Activated B cell treated with CpG ODN at 0.5 μM for 24 hours (primary cell): ENCODE measurements at regions of chrX and their contacts with region 1.

Region 1: DNA sequence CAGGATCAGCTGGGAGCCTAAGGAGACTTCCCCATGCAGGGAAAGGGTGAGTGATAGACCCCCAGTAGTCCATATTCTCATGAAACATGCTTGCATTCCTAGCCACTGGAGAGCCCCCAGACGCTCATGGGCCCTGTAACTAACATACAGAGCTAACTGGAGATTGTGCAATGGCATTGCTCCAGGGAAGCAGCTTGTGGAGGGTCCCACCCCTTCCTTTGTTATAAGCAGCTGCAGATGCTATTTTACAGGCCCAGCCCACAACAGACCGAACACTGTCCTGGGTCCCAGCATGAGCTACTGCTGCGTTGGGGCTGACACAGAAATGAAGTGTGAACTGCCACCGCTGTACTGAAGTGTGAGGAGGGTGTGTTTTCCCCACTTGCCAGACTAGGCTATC is 1465.7 kb upstream of the DIAPH2 start:
- DNase-seq: no peak
- ATAC-seq: no peak
- H3K4me3 Mint-ChIP-seq: no peak overlapping the region
- H3K27ac Mint-ChIP-seq: no peak overlapping the region
- H3K4me1 Mint-ChIP-seq: no peaks in the 10 kb centered on the region
- H3K27me3 Mint-ChIP-seq: no peaks in the 10 kb centered on the region
- CTCF ChIP-seq: no peak

Region 2: GRCh38 chrX:95101851-95102250 is 117.1 kb before region 1 on chrX:
- CTCF ChIA-PET with region 1: no interaction called
- POLR2A ChIA-PET with region 1: no interaction called
- intact Hi-C with region 1: no loop called
- DNase-seq: no peak
- ATAC-seq: no peak
- H3K4me3 Mint-ChIP-seq: no peak overlapping the region
- H3K27ac Mint-ChIP-seq: no peak overlapping the region
- H3K4me1 Mint-ChIP-seq: no peaks in the 10 kb centered on the region
- H3K27me3 Mint-ChIP-seq: no peaks in the 10 kb centered on the region
- CTCF ChIP-seq: no peak

Region 3: GRCh38 chrX:95156566-95156965 is 62.4 kb before region 1 on chrX:
- CTCF ChIA-PET with region 1: no interaction called
- POLR2A ChIA-PET with region 1: no interaction called
- intact Hi-C with region 1: loop called (anchors 10 kb)
- DNase-seq: no peak
- ATAC-seq: no peak
- H3K4me3 Mint-ChIP-seq: no peak overlapping the region
- H3K27ac Mint-ChIP-seq: no peak overlapping the region
- H3K4me1 Mint-ChIP-seq: no peaks in the 10 kb centered on the region
- H3K27me3 Mint-ChIP-seq: no peaks in the 10 kb centered on the region
- CTCF ChIP-seq: no peak

Region 4: GRCh38 chrX:95248386-95248785 is 29.4 kb after region 1 on chrX:
- CTCF ChIA-PET with region 1: no interaction called
- POLR2A ChIA-PET with region 1: no interaction called
- intact Hi-C with region 1: no loop called
- DNase-seq: no peak
- ATAC-seq: no peak
- H3K4me3 Mint-ChIP-seq: no peak overlapping the region
- H3K27ac Mint-ChIP-seq: no peak overlapping the region
- H3K4me1 Mint-ChIP-seq: no peaks in the 10 kb centered on the region
- H3K27me3 Mint-ChIP-seq: no peaks in the 10 kb centered on the region
- CTCF ChIP-seq: no peak